ENCODE measurements at regions of chr10 and their contacts with region 1.

Region 1: GRCh38 chr10:7337431-7338171 is 73.2 kb downstream of the SFMBT2 start:
- DNase-seq: no peak
- ATAC-seq: no peak
- H3K4me3 ChIP-seq: no peak overlapping the region
- H3K27ac ChIP-seq: no peak overlapping the region
- H3K4me1 ChIP-seq: peaks cover 16% of the 10 kb centered on the region
- CTCF ChIP-seq: no peak
- EP300 ChIP-seq: no peak
- POLR2A ChIP-seq: no peak
- RAD21 ChIP-seq: no peak

Region 2: DNA sequence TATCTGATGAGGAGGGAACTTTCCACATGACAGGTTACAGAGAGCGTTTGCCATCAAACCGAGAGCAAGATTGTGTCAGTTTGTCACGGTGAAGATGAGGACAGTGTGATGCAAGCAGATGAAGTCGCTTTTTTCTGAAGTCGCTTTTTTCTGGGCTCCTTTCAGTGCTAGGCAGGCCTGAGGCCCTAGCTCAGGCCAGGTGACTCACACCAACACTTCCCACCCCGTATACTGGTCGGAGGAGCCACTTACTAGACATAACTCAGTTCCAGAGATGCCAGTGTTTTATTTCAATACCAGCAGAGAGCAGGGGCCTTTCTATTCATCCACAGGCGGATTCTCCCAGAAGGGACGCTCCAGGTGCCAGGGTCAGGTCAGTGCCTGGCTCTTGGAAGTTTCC is 14.3 kb after region 1 on chr10:
- CTCF ChIA-PET with region 1: interaction called, 14 read pairs
- POLR2A ChIA-PET with region 1: no interaction called
- DNase-seq: no peak
- ATAC-seq: peak; percentile 48 to 51; a peak in 3 of 6 replicates
- H3K4me3 ChIP-seq: no peak overlapping the region
- H3K27ac ChIP-seq: peak overlapping the region; percentile 32 to 83; a peak in 5 of 6 replicates
- H3K4me1 ChIP-seq: peaks cover 36% of the 10 kb centered on the region
- CTCF ChIP-seq: no peak
- EP300 ChIP-seq: no peak
- POLR2A ChIP-seq: no peak
- RAD21 ChIP-seq: no peak

Region 3: DNA sequence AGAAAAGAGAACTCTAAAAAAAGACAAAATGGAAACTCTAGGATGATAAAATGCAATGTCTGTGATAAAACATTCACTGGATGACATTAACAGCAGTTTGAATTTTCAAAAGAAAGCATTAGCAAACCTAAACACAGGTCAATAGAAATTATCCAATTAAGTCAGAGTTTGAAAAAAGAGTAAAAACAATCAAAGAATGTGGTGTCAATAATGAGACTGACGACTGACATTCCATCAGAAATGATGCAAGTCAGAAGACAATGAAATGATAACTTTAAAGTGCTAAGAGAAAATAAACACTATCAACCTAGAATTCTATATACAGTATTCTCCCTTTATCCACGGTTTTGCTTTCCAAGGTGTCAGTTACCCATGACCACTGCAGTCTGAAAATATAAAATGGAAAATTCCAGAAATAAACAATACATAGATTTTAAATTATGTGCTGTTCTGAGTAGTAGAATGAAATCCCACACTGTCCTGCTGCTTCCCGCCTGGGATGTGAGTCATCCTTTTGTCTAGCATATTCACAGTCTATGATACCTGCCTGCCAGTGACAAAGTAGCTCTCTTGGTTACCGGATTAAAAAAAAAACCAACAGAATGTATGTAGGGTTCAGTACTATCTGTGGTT is 111.6 kb after region 1 on chr10:
- CTCF ChIA-PET with region 1: no interaction called
- POLR2A ChIA-PET with region 1: no interaction called
- DNase-seq: no peak
- ATAC-seq: no peak
- H3K4me3 ChIP-seq: no peak overlapping the region
- H3K27ac ChIP-seq: no peak overlapping the region
- H3K4me1 ChIP-seq: no peaks in the 10 kb centered on the region
- CTCF ChIP-seq: no peak
- EP300 ChIP-seq: no peak
- POLR2A ChIP-seq: no peak
- RAD21 ChIP-seq: no peak

Measured in A549 (cell line).